ENCODE measurements at regions of chr18 and their contacts with region 1.

Region 1: GRCh38 chr18:21391074-21391673 is 149.1 kb downstream of the GREB1L start:
- DNase-seq: no peak
- ATAC-seq: peak in 1 of 2 donors; percentile 24
- H3K4me3 ChIP-seq: no peak overlapping the region
- H3K27ac ChIP-seq: no peak overlapping the region
- H3K4me1 ChIP-seq: no peaks in the 10 kb centered on the region
- H3K27me3 ChIP-seq: no peaks in the 10 kb centered on the region
- CTCF ChIP-seq: no peak
- POLR2A ChIP-seq: no peak

Region 2: DNA sequence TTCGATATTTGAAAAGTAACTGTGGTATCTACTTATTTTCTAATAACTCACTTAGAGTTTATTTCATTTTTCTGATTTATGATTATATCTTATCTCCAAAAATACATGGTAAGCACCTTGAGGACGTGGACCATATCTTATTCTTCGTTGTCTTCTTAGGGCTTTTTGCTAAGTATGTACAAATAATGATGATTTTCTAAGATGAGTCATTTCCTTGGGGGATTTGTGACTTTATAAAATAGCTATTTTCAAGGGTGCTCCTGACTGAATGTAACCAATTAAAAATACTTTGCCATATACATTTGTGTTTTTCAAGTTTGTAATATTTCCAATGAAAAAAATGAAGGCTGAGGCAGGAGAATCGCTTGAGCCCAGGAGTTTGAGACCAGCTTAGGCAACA is 92.8 kb before region 1 on chr18:
- in situ Hi-C with region 1: loop called in 2 of 4 experiments (anchors 25 kb)
- intact Hi-C with region 1: no loop called
- DNase-seq: no peak
- ATAC-seq: no peak
- H3K4me3 ChIP-seq: no peak overlapping the region
- H3K27ac ChIP-seq: no peak overlapping the region
- H3K4me1 ChIP-seq: no peaks in the 10 kb centered on the region
- H3K27me3 ChIP-seq: no peaks in the 10 kb centered on the region
- CTCF ChIP-seq: no peak
- POLR2A ChIP-seq: no peak

Region 3: GRCh38 chr18:21496277-21496835 is 105.2 kb after region 1 on chr18:
- in situ Hi-C with region 1: no loop called
- intact Hi-C with region 1: no loop called
- DNase-seq: no peak
- ATAC-seq: no peak
- H3K4me3 ChIP-seq: no peak overlapping the region
- H3K27ac ChIP-seq: no peak overlapping the region
- H3K4me1 ChIP-seq: no peaks in the 10 kb centered on the region
- H3K27me3 ChIP-seq: no peaks in the 10 kb centered on the region
- CTCF ChIP-seq: no peak
- POLR2A ChIP-seq: no peak

Region 4: DNA sequence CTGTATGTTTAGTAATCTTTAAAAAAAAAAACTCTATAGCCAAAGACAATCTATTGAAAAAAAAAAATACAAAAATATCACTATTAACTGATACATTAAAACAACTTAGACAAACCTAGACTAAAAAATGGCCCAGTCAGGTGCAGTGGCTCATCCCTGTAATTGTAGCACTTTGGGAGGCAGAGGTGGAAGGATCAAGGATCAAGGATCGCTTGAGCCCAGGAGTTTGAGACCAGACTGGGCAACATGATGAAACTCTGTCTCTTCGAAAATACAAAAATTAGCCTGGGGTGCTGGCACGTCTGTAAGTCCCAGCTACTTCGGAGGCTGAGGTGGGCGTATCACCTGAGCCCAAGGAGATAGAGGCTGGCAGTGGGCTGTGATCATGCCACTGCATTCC is 193.2 kb after region 1 on chr18:
- in situ Hi-C with region 1: no loop called
- intact Hi-C with region 1: no loop called
- DNase-seq: no peak
- ATAC-seq: no peak
- H3K4me3 ChIP-seq: no peak overlapping the region
- H3K27ac ChIP-seq: no peak overlapping the region
- H3K4me1 ChIP-seq: peaks cover 0 to 4% of the 10 kb centered on the region in 2 donors
- H3K27me3 ChIP-seq: no peaks in the 10 kb centered on the region
- CTCF ChIP-seq: no peak
- POLR2A ChIP-seq: no peak